Transverse colon (tissue), 4 donors: ENCODE measurements at regions of chr1 and their contacts with region 1.

Region 1: GRCh38 chr1:44036409-44037139 is 5.3 kb upstream of the SLC6A9 start:
- DNase-seq: peak; percentile 77
- H3K4me3 ChIP-seq: no peak overlapping the region
- H3K27ac ChIP-seq: peak overlapping the region in 3 of 4 donors; percentile 35 to 75 (median 66)
- H3K4me1 ChIP-seq: peaks cover 16 to 27% (median 25%) of the 10 kb centered on the region in 4 donors
- H3K27me3 ChIP-seq: no peaks in the 10 kb centered on the region
- CTCF ChIP-seq: peak; percentile 77 to 93 (median 80)
- EP300 ChIP-seq: no peak
- POLR2A ChIP-seq: no peak

Region 2: DNA sequence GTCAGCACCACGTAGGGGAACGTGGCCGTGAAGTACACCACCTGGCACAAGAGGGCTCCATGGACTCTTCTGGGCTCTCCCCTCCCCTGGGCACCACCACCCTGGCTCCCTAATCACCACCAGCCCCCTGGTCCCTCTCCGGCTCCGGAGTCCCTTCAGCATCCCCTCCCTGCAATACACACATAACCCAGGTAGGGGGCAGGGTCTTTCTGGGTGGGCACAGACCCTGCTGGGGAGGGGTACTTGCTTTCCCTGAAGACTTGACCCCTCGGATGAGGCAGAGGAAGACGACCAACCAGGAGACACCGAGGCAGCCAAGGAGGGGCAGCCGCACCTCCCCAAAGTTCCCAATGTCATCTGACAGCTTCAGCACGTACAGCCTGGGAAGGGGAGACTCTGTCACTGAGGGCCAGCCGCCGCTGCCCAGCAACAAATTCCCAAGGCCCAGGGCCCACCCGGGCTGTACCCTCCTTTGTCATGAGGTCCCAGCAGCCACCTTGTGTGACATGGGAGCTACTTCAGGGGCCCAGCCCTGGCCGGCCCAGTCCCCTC is 33.9 kb before region 1 on chr1:
- in situ Hi-C with region 1: loop called in 2 of 4 experiments (anchors 5 to 10 kb)
- intact Hi-C with region 1: loop called (anchors 5 kb)
- DNase-seq: no peak
- H3K4me3 ChIP-seq: no peak overlapping the region
- H3K27ac ChIP-seq: no peak overlapping the region
- H3K4me1 ChIP-seq: peaks cover 0 to 5% (median 2%) of the 10 kb centered on the region in 4 donors
- H3K27me3 ChIP-seq: no peaks in the 10 kb centered on the region
- CTCF ChIP-seq: no peak
- EP300 ChIP-seq: no peak
- POLR2A ChIP-seq: no peak

Region 3: GRCh38 chr1:45011837-45012638 is 975.5 kb after region 1 on chr1 and contains the start of gene UROD:
- in situ Hi-C with region 1: no loop called
- intact Hi-C with region 1: no loop called
- DNase-seq: peak; percentile 93
- H3K4me3 ChIP-seq: peak within 1 kb of the TSS; percentile 79 to 94 (median 86)
- H3K27ac ChIP-seq: peak within 1 kb of the TSS; percentile 88 to 93 (median 91)
- H3K4me1 ChIP-seq: peaks cover 18 to 39% (median 34%) of the 10 kb centered on the region in 4 donors
- H3K27me3 ChIP-seq: no peaks in the 10 kb centered on the region
- CTCF ChIP-seq: no peak
- EP300 ChIP-seq: no peak
- POLR2A ChIP-seq: peak; percentile 62
- total RNA-seq, gene UROD: 46.4 to 85.7 (median 63.9) TPM